ENCODE measurements at regions of chr9 and their contacts with region 1.

Region 1: DNA sequence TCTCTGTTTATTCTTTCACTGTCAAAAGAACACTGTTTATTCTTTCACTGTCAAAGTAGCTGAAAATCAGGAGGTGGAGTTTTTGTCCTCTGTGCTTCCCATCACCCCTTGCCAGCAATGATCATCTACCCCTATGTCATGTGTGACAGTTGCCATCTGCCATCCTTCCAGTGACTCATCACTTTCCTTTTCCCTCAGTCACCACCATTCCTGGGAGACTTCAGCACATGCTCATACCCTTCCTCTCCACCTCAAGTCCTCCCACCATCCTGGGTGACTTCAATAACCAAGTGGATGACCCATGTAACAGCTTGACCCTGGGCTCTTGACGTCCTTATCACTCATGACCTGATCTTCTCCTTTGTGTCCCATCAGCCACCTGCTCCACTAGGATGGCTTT is 43.3 kb upstream of the RASEF start:
- DNase-seq: no peak
- H3K4me3 ChIP-seq: no peak overlapping the region
- H3K4me3 Mint-ChIP-seq: no peak overlapping the region
- H3K27ac Mint-ChIP-seq: no peak overlapping the region
- H3K4me1 ChIP-seq: no peaks in the 10 kb centered on the region
- H3K4me1 Mint-ChIP-seq: no peaks in the 10 kb centered on the region
- H3K27me3 ChIP-seq: no peaks in the 10 kb centered on the region
- H3K27me3 Mint-ChIP-seq: no peaks in the 10 kb centered on the region
- CTCF ChIP-seq: no peak

Region 2: GRCh38 chr9:83081010-83081690 is 25.1 kb before region 1 on chr9:
- CTCF ChIA-PET with region 1: no interaction called
- POLR2A ChIA-PET with region 1: no interaction called
- intact Hi-C with region 1: loop called (anchors 2 kb)
- DNase-seq: no peak
- H3K4me3 ChIP-seq: no peak overlapping the region
- H3K4me3 Mint-ChIP-seq: no peak overlapping the region
- H3K27ac Mint-ChIP-seq: no peak overlapping the region
- H3K4me1 ChIP-seq: no peaks in the 10 kb centered on the region
- H3K4me1 Mint-ChIP-seq: no peaks in the 10 kb centered on the region
- H3K27me3 ChIP-seq: no peaks in the 10 kb centered on the region
- H3K27me3 Mint-ChIP-seq: no peaks in the 10 kb centered on the region
- CTCF ChIP-seq: no peak